SK-N-SH (cell line): ENCODE measurements at regions of chr5 and their contacts with region 1.

Region 1: GRCh38 chr5:58849921-58850667 is 267.2 kb downstream of the RAB3C start:
- DNase-seq: peak; percentile 49
- H3K4me3 ChIP-seq: no peak overlapping the region
- H3K27ac ChIP-seq: peak overlapping the region in 1 of 2 experiments; percentile 93; a peak in 2 of 4 replicates
- H3K4me1 ChIP-seq: peaks cover 0 to 11% of the 10 kb centered on the region in 2 experiments; a peak in 2 of 4 replicates
- H3K27me3 ChIP-seq: 0 out of 2 replicates have a peak, but pooled peaks cover 8% of the 10 kb centered on the region
- CTCF ChIP-seq: peak; percentile 59
- EP300 ChIP-seq: peak in 1 of 2 experiments; percentile 24; a peak in 1 of 4 replicates
- RAD21 ChIP-seq: peak; percentile 85

Region 2: DNA sequence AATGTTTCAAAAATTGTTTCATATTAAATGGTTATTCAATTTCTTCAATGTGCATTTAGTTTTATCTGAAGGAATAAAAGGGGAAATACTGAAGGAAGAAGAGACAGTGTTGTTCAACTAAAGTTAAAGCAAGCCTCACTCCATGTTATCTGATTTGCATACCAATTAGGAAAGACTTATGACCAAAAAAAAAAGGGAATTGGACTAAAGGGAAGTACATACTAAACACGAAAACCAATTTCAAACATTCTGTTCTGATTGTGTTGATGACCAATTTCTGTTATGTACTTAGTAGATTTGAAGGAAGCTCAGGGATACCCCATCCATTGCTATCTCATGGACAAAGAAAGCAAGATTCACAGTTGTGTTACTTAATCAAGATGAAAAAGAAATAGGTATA is 363.8 kb before region 1 on chr5:
- CTCF ChIA-PET with region 1: interaction called, 28 read pairs
- POLR2A ChIA-PET with region 1: no interaction called
- DNase-seq: no peak
- H3K4me3 ChIP-seq: no peak overlapping the region
- H3K27ac ChIP-seq: no peak overlapping the region
- H3K4me1 ChIP-seq: no peaks in the 10 kb centered on the region
- H3K27me3 ChIP-seq: no peaks in the 10 kb centered on the region; the same call in 1 of the 2 replicates
- CTCF ChIP-seq: no peak
- EP300 ChIP-seq: no peak
- RAD21 ChIP-seq: no peak

Region 3: GRCh38 chr5:58498340-58498942 is 351.7 kb before region 1 on chr5:
- CTCF ChIA-PET with region 1: interaction called, 100 read pairs
- POLR2A ChIA-PET with region 1: no interaction called
- DNase-seq: peak; percentile 37
- H3K4me3 ChIP-seq: no peak overlapping the region; a peak in 1 of 4 replicates
- H3K27ac ChIP-seq: no peak overlapping the region
- H3K4me1 ChIP-seq: no peaks in the 10 kb centered on the region; a peak in 1 of 4 replicates
- H3K27me3 ChIP-seq: no peaks in the 10 kb centered on the region; the same call in 1 of the 2 replicates
- CTCF ChIP-seq: peak; percentile 82
- EP300 ChIP-seq: no peak
- RAD21 ChIP-seq: peak; percentile 85

Region 4: GRCh38 chr5:58582803-58583491 is 267.1 kb before region 1 on chr5 and contains the start of gene RAB3C:
- CTCF ChIA-PET with region 1: interaction called, 10 read pairs
- POLR2A ChIA-PET with region 1: interaction called, 17 read pairs
- DNase-seq: peak; percentile 89
- H3K4me3 ChIP-seq: peak within 1 kb of the TSS; percentile 60 to 70
- H3K27ac ChIP-seq: peak within 1 kb of the TSS in 1 of 2 experiments; percentile 92; a peak in 2 of 4 replicates
- H3K4me1 ChIP-seq: peaks cover 0 to 3% of the 10 kb centered on the region in 2 experiments; a peak in 2 of 4 replicates
- H3K27me3 ChIP-seq: 0 out of 2 replicates have a peak, but pooled peaks cover 6% of the 10 kb centered on the region
- CTCF ChIP-seq: no peak
- EP300 ChIP-seq: no peak
- RAD21 ChIP-seq: no peak
- polyA plus RNA-seq, gene RAB3C: 0.03 and 0.49 TPM in 2 replicates

Region 5: GRCh38 chr5:58828258-58828657 is 21.8 kb before region 1 on chr5:
- CTCF ChIA-PET with region 1: interaction called, 13 read pairs
- POLR2A ChIA-PET with region 1: no interaction called
- DNase-seq: no peak
- H3K4me3 ChIP-seq: no peak overlapping the region
- H3K27ac ChIP-seq: no peak overlapping the region
- H3K4me1 ChIP-seq: peaks cover 0 to 4% of the 10 kb centered on the region in 2 experiments; a peak in 1 of 4 replicates
- H3K27me3 ChIP-seq: no peaks in the 10 kb centered on the region
- CTCF ChIP-seq: no peak
- EP300 ChIP-seq: no peak
- RAD21 ChIP-seq: no peak

Region 6: GRCh38 chr5:58871648-58872242 is 21.7 kb after region 1 on chr5:
- CTCF ChIA-PET with region 1: interaction called, 12 read pairs
- POLR2A ChIA-PET with region 1: no interaction called
- DNase-seq: peak; percentile 26
- H3K4me3 ChIP-seq: no peak overlapping the region; a peak in 1 of 4 replicates
- H3K27ac ChIP-seq: no peak overlapping the region
- H3K4me1 ChIP-seq: peaks cover 0 to 4% of the 10 kb centered on the region in 2 experiments; a peak in 1 of 4 replicates
- H3K27me3 ChIP-seq: no peaks in the 10 kb centered on the region
- CTCF ChIP-seq: peak; percentile 73
- EP300 ChIP-seq: no peak
- RAD21 ChIP-seq: peak; percentile 47